IMR-90 (cell line): ENCODE measurements at regions of chr17 and their contacts with region 1.

Region 1: GRCh38 chr17:42414704-42415409 is 8.2 kb downstream of the CAVIN1 start:
- DNase-seq: no peak
- ATAC-seq: no peak
- H3K4me3 ChIP-seq: no peak overlapping the region
- H3K27ac ChIP-seq: peak overlapping the region; percentile 20; the same call in 1 of the 2 replicates
- H3K4me1 ChIP-seq: peaks cover 33% of the 10 kb centered on the region
- H3K27me3 ChIP-seq: no peaks in the 10 kb centered on the region
- CTCF ChIP-seq: no peak
- POLR2A ChIP-seq: no peak
- RAD21 ChIP-seq: no peak

Region 2: GRCh38 chr17:42183741-42184711 is 230.8 kb before region 1 on chr17:
- CTCF ChIA-PET with region 1: no interaction called
- POLR2A ChIA-PET with region 1: interaction called, 19 read pairs
- dilution Hi-C with region 1: no loop called
- in situ Hi-C with region 1: no loop called
- intact Hi-C with region 1: no loop called
- DNase-seq: peak; percentile 63
- ATAC-seq: peak; percentile 92
- H3K4me3 ChIP-seq: peak overlapping the region; percentile 71
- H3K27ac ChIP-seq: peak overlapping the region; percentile 58
- H3K4me1 ChIP-seq: peaks cover 9% of the 10 kb centered on the region
- H3K27me3 ChIP-seq: peaks cover 28% of the 10 kb centered on the region
- CTCF ChIP-seq: peak; percentile 96
- POLR2A ChIP-seq: no peak
- RAD21 ChIP-seq: peak; percentile 65